Ascending aorta (tissue), 2 donors: ENCODE measurements at regions of chr4 and their contacts with region 1.

Region 1: GRCh38 chr4:183504064-183504929 is 561 bp upstream of the ING2 start:
- DNase-seq: peak; percentile 93 to 100
- H3K4me3 ChIP-seq: peak overlapping the region; percentile 85 to 98
- H3K27ac ChIP-seq: peak overlapping the region; percentile 92 to 95
- H3K4me1 ChIP-seq: peaks cover 4 to 16% of the 10 kb centered on the region in 2 donors
- H3K27me3 ChIP-seq: no peaks in the 10 kb centered on the region
- CTCF ChIP-seq: peak; percentile 7 to 34 (median 8)

Region 2: DNA sequence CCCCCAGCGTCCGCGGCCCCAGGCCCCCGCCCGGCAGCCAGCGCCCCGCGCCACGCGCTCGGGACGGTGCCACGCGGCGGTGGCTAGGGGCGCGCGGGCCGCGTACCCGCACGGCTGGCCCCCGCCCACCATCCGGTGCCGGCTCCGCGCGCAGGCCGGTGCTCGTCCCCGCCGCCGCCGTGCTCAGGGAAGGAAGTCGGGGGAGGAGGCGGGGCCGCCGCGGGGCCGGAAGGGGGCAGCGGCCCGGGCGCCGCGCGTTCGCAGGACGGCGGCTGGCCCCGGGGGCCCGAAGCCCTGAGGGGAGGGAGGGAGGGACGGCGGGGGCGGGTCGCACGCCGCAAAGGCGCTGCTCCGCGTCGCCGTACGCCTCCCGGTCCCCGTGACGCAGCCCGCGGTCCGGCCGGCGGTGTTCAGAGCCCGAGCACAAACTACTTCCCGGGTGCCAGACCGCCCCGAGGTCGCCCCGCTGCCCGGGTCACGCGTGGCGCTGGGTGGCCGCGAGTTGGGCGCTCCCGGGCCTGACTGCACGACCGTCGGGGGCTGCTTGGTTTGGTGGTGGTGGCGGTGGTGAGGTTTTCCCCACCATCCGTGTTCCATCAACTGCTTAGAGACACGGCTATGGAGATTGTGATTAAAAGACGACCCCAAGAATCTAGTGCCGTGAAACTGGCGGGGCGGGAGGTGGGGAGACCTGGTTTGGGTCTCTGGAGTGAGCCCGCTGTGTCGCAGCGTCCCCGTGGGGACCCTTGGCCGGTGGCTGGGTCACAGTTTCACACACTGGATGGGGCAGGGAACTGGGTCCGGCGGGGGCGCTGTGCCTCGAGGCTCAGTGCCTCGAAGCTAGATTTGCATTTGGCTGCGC is 586.9 kb before region 1 on chr4 and contains the start of gene DCTD:
- intact Hi-C with region 1: loop called (anchors 2 kb)
- DNase-seq: peak; percentile 23 to 88
- H3K4me3 ChIP-seq: peak within 1 kb of the TSS; percentile 76 to 87
- H3K27ac ChIP-seq: peak within 1 kb of the TSS; percentile 86 to 99
- H3K4me1 ChIP-seq: peaks cover 0 to 8% of the 10 kb centered on the region in 2 donors
- H3K27me3 ChIP-seq: no peaks in the 10 kb centered on the region
- CTCF ChIP-seq: peak in 2 of 3 experiments; percentile 38 to 44
- total RNA-seq, gene DCTD: 17.2 TPM

Region 3: DNA sequence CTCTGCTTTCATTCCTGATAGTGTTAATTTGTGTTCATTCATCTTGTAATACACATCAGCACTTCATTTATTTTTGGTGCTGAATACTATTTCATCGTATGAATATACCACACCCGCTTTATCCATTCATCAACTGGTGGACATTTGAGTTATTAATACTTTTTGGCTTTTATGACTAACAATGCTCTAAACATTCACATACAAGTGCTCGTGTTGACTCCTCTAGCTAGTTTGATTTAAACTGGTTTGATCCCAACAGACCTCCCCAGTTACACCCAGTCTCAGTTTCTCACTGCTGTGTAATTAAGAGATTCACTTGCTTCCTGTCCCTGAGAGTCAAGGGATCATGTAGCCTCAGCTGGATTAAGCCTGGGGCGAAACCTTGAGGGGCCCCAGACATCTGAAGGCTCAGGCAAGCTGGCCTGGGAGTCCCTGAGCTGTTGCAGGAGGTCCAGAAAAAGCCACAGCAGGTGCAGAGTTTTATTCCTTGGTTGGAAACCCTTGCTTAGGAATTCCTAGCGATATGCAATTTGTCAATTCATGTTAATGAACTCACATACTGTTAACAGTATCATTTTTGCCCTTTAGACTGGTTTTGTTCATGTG is 129.2 kb before region 1 on chr4:
- intact Hi-C with region 1: no loop called
- DNase-seq: no peak
- H3K4me3 ChIP-seq: no peak overlapping the region
- H3K27ac ChIP-seq: no peak overlapping the region
- H3K4me1 ChIP-seq: no peaks in the 10 kb centered on the region
- H3K27me3 ChIP-seq: no peaks in the 10 kb centered on the region
- CTCF ChIP-seq: no peak

Region 4: DNA sequence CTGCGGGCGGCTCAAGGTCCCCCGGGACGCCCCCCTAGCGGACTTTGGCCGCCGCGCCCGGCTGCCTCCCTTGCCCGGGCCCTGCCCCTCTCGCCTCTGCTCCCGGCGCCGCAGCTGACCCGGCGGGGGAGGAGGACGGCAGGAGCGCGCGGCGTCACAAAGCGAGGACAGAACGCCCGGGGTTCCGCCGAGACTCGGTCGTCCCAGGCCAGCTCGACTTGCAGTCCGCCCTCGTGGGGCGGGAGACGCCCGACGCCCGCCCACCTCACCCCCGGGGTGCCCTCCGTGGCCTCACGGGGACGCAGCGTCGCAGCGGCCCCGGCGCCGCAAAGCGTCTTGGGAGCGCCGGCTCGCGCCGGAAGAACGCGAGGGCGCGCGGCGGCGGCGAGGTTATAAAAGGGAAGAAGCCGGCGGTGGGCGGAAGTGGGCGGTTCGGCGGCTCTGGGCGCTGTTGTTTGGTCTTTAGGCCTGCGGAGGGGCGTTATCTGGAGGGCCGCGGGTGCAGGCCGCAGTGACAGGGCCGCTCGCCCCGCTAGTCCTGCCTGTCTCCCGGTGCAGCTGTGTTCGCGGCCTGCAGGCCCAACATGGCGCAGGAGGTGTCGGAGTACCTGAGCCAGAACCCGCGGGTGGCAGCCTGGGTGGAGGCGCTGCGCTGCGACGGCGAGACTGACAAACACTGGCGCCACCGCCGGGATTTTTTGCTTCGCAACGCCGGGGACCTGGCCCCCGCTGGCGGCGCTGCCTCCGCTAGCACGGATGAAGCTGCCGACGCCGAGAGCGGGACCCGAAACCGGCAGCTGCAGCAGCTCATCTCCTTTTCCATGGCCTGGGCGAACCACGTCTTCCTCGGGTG is 59.9 kb before region 1 on chr4 and contains the start of gene CDKN2AIP:
- intact Hi-C with region 1: loop called (anchors 1 kb)
- DNase-seq: peak; percentile 64 to 96
- H3K4me3 ChIP-seq: peak within 1 kb of the TSS; percentile 89 to 96
- H3K27ac ChIP-seq: peak within 1 kb of the TSS; percentile 95 to 99
- H3K4me1 ChIP-seq: peaks cover 12 to 30% of the 10 kb centered on the region in 2 donors
- H3K27me3 ChIP-seq: no peaks in the 10 kb centered on the region
- CTCF ChIP-seq: peak in 1 of 3 experiments; percentile 17
- total RNA-seq, gene CDKN2AIP: 34.5 TPM

Region 5: DNA sequence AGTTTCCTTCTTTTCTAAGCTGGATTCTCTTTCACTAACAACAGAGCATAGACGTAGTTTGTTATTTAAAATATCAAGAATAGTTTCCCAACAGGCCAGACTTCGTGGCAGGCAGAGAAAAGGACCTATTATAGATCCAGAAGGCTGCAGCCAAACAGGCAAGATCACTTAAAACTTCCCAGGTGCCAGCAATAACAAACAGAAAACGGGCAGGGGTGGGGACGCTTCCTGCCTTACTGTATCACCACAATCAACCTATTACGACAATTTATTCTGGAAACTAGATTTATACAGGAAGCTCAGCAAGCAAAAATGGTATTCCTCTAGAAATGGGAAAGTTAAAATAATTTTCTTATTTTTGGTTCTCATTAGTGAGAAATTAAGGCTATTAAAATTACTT is 132.6 kb after region 1 on chr4:
- intact Hi-C with region 1: loop called (anchors 2 kb)
- DNase-seq: peak in 1 of 2 donors; percentile 80
- H3K4me3 ChIP-seq: peak overlapping the region; percentile 29 to 56
- H3K27ac ChIP-seq: peak overlapping the region; percentile 77 to 79
- H3K4me1 ChIP-seq: peaks cover 0 to 22% of the 10 kb centered on the region in 2 donors
- H3K27me3 ChIP-seq: no peaks in the 10 kb centered on the region
- CTCF ChIP-seq: no peak

Region 6: DNA sequence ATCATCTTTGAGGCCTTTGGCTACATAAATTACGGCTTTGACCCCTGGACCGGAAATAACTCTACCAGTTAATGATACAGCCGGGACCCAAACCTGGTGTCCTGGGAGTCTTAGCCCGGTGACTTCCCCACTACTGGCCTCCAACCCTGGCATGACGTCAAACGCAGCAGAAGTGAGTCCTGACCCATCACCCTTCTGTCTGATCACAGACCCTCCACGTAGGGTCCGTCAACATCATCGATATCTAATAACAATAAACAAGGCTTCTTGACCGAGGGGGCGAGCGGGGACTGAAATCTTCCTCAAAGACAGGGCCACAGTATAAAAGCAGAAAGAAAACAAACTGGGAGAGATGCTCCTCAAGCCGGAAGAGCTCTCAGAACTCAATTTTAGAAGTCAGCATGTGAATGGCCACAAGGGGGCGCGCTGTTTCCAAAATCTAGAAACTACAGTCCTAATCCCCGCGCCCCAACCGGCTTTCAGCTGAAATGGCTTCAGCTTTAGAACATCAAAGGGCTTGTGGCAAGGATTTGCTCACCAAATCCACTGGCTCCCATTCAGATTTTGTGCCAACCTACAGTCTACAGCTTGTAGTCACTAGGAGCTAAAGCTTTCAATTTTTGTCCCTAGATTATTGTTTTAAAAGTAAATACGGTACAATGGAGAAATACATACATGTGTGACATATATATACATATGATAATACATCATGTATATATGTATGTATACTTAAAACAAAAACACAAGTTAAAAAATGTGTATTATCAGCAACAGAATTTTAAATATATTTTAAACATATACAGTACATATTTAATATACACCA is 759.8 kb after region 1 on chr4:
- intact Hi-C with region 1: loop called (anchors 10 kb)
- DNase-seq: peak; percentile 46 to 98
- H3K4me3 ChIP-seq: no peak overlapping the region
- H3K27ac ChIP-seq: no peak overlapping the region
- H3K4me1 ChIP-seq: peaks cover 0 to 2% of the 10 kb centered on the region in 2 donors
- H3K27me3 ChIP-seq: no peaks in the 10 kb centered on the region
- CTCF ChIP-seq: peak; percentile 83 to 92 (median 90)

Region 7: GRCh38 chr4:184538023-184538599 is 1033.8 kb after region 1 on chr4:
- intact Hi-C with region 1: loop called (anchors 5 kb)
- DNase-seq: peak; percentile 62 to 94
- H3K4me3 ChIP-seq: peak overlapping the region; percentile 66 to 70
- H3K27ac ChIP-seq: peak overlapping the region; percentile 88 to 89
- H3K4me1 ChIP-seq: peaks cover 2 to 20% of the 10 kb centered on the region in 2 donors
- H3K27me3 ChIP-seq: no peaks in the 10 kb centered on the region
- CTCF ChIP-seq: peak; percentile 51 to 71 (median 69)